PC-3 (cell line): ENCODE measurements at regions of chr1 and their contacts with region 1.

Region 1: GRCh38 chr1:240385985-240386978 is 225.7 kb downstream of the GREM2 start:
- DNase-seq: peak; percentile 93
- ATAC-seq: peak; percentile 54
- H3K4me3 ChIP-seq: peak overlapping the region; percentile 33
- H3K27ac ChIP-seq: peak overlapping the region; percentile 60
- H3K4me1 ChIP-seq: peaks cover 23% of the 10 kb centered on the region
- H3K27me3 ChIP-seq: no peaks in the 10 kb centered on the region
- CTCF ChIP-seq: no peak

Region 2: GRCh38 chr1:240344918-240345317 is 41.4 kb before region 1 on chr1:
- CTCF ChIA-PET with region 1: no interaction called
- POLR2A ChIA-PET with region 1: no interaction called
- intact Hi-C with region 1: loop called (anchors 5 kb)
- DNase-seq: peak; percentile 48
- ATAC-seq: peak; percentile 53
- H3K4me3 ChIP-seq: no peak overlapping the region
- H3K27ac ChIP-seq: 0 out of 2 replicates have a peak overlapping the region, but pooled peaks have one; percentile 10
- H3K4me1 ChIP-seq: peaks cover 14% of the 10 kb centered on the region; the same call in 1 of the 2 replicates
- H3K27me3 ChIP-seq: no peaks in the 10 kb centered on the region
- CTCF ChIP-seq: no peak